ENCODE measurements at regions of chr3 and their contacts with region 1.

Region 1: GRCh38 chr3:52959773-52960172 is 62.4 kb upstream of the STIMATE start:
- DNase-seq: no peak
- ATAC-seq: no peak
- H3K4me3 ChIP-seq: no peak overlapping the region
- H3K27ac ChIP-seq: no peak overlapping the region
- H3K4me1 ChIP-seq: no peaks in the 10 kb centered on the region
- H3K27me3 ChIP-seq: no peaks in the 10 kb centered on the region
- CTCF ChIP-seq: no peak

Region 2: GRCh38 chr3:53114011-53114400 is 154.2 kb after region 1 on chr3:
- CTCF ChIA-PET with region 1: interaction called, 10 read pairs
- POLR2A ChIA-PET with region 1: no interaction called
- in situ Hi-C with region 1: no loop called
- intact Hi-C with region 1: no loop called
- DNase-seq: peak; percentile 54
- ATAC-seq: peak; percentile 92
- H3K4me3 ChIP-seq: no peak overlapping the region
- H3K27ac ChIP-seq: no peak overlapping the region
- H3K4me1 ChIP-seq: peaks cover 5% of the 10 kb centered on the region
- H3K27me3 ChIP-seq: no peaks in the 10 kb centered on the region
- CTCF ChIP-seq: peak; percentile 90

Region 3: GRCh38 chr3:54157860-54158259 is 1198.1 kb after region 1 on chr3:
- CTCF ChIA-PET with region 1: no interaction called
- POLR2A ChIA-PET with region 1: interaction called, 17 read pairs
- in situ Hi-C with region 1: no loop called
- intact Hi-C with region 1: no loop called
- DNase-seq: no peak
- ATAC-seq: no peak
- H3K4me3 ChIP-seq: no peak overlapping the region
- H3K27ac ChIP-seq: no peak overlapping the region
- H3K4me1 ChIP-seq: no peaks in the 10 kb centered on the region
- H3K27me3 ChIP-seq: no peaks in the 10 kb centered on the region
- CTCF ChIP-seq: no peak